Naive thymus-derived CD4-positive, alpha-beta T cell (primary cell): ENCODE measurements at regions of chr3 and their contacts with region 1.

Region 1: DNA sequence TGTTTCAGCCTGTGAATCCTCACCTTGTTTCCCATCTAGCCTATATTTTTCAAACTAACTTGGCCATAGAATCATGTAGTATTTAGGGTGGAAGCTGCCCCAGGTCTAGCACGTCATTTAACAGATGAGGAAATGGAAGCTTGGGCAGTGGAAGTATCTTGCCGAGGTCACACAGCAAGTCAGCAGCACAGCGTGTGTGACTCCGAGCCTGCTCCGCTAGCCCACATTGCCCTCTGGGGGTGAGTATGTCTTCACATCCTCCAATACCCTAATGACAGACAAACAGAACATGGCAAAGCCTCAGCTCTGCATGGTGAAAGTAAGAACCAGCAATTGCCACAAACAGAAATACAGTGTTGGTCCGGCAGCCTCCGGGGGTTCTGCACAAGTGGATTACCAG is 2.2 kb upstream of the CCR5 start:
- DNase-seq: peak in 4 of 9 donors; percentile 14 to 37 (median 20)
- ATAC-seq: peak; percentile 90
- H3K4me3 ChIP-seq: no peak overlapping the region
- H3K4me3 Mint-ChIP-seq: peak overlapping the region in 4 of 10 donors; percentile 3 to 26 (median 21)
- H3K27ac ChIP-seq: no peak overlapping the region
- H3K27ac Mint-ChIP-seq: peak overlapping the region in 3 of 9 donors; percentile 24 to 65 (median 57)
- H3K4me1 ChIP-seq: peaks cover 8 to 55% of the 10 kb centered on the region in 2 donors
- H3K4me1 Mint-ChIP-seq: peaks cover 6 to 63% (median 20%) of the 10 kb centered on the region in 7 donors
- H3K27me3 ChIP-seq: no peaks in the 10 kb centered on the region
- H3K27me3 Mint-ChIP-seq: peaks cover 0 to 39% (median 0%) of the 10 kb centered on the region in 5 donors

Region 2: GRCh38 chr3:46087871-46088270 is 280.7 kb before region 1 on chr3:
- CTCF ChIA-PET with region 1: no interaction called
- POLR2A ChIA-PET with region 1: no interaction called
- intact Hi-C with region 1: loop called in 1 of 2 experiments (anchors 1 kb)
- DNase-seq: no peak
- ATAC-seq: no peak
- H3K4me3 ChIP-seq: no peak overlapping the region
- H3K4me3 Mint-ChIP-seq: no peak overlapping the region
- H3K27ac ChIP-seq: no peak overlapping the region
- H3K27ac Mint-ChIP-seq: no peak overlapping the region
- H3K4me1 ChIP-seq: peaks cover 0 to 7% of the 10 kb centered on the region in 2 donors
- H3K4me1 Mint-ChIP-seq: peaks cover 0 to 52% (median 0%) of the 10 kb centered on the region in 7 donors
- H3K27me3 ChIP-seq: no peaks in the 10 kb centered on the region
- H3K27me3 Mint-ChIP-seq: peaks cover 0 to 28% (median 0%) of the 10 kb centered on the region in 5 donors

Region 3: GRCh38 chr3:46208167-46208704 is 160.3 kb before region 1 on chr3 and contains the start of gene CCR1:
- CTCF ChIA-PET with region 1: no interaction called
- POLR2A ChIA-PET with region 1: no interaction called
- intact Hi-C with region 1: loop called in 1 of 2 experiments (anchors 1 kb)
- DNase-seq: peak in 2 of 9 donors; percentile 0 to 64
- ATAC-seq: peak; percentile 72
- H3K4me3 ChIP-seq: no peak within 1 kb of the TSS
- H3K4me3 Mint-ChIP-seq: peak within 1 kb of the TSS in 4 of 10 donors; percentile 8 to 72 (median 41)
- H3K27ac ChIP-seq: no peak within 1 kb of the TSS
- H3K27ac Mint-ChIP-seq: peak within 1 kb of the TSS in 8 of 9 donors; percentile 5 to 93 (median 57)
- H3K4me1 ChIP-seq: peaks cover 13 to 44% of the 10 kb centered on the region in 2 donors
- H3K4me1 Mint-ChIP-seq: peaks cover 8 to 64% (median 24%) of the 10 kb centered on the region in 7 donors
- H3K27me3 ChIP-seq: no peaks in the 10 kb centered on the region
- H3K27me3 Mint-ChIP-seq: peaks cover 0 to 2% (median 0%) of the 10 kb centered on the region in 5 donors
- total RNA-seq, gene CCR1: 2.2 to 27.6 (median 4.5) TPM

Region 4: DNA sequence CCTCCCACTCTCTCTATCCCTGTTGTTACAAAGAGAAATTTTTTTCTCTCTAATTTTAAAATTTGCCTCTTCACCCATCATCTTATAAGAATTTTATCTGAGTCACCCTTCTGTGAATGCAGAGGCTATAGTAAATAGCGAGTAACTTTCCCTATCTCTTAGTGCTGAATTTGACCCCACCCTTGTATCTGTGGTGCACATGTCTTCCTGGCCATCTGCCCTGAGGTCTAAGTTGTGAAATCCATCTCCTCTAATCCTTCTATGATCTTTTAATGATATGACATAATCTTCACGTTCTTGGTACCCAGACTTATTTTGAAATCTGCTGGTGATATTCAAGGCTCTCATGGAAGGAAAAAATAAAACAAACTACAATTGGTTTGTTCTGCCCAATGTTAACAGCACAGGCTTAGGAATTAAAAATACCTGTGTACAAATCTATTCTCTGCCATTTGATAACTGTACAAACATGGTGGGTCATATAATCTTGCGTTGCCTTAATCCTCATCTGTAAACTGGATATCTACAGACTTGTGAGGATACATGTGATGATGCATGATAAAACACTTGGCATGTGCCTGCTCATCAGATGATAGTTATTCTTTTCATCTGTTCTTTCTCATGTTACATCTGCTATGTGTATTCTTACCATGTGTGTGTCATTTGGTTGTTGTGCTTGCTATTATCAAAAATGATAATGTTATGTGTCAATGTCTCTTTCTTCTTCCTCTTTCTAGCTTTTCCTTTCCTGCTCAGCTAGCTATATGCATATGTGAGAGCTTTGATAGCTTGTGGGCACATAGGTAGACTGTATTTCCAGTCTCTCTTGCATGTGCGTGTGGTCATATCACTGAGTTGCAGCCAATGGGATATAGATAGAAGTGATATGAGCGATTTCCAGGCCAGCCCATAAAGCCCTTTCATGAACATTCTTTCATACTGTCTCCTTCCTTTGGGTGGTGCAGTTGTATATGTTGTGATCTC is 140.0 kb before region 1 on chr3:
- CTCF ChIA-PET with region 1: interaction called, 4 read pairs
- POLR2A ChIA-PET with region 1: no interaction called
- intact Hi-C with region 1: loop called (anchors 5 kb)
- DNase-seq: no peak
- ATAC-seq: peak; percentile 80
- H3K4me3 ChIP-seq: no peak overlapping the region
- H3K4me3 Mint-ChIP-seq: peak overlapping the region in 1 of 10 donors; percentile 34
- H3K27ac ChIP-seq: no peak overlapping the region
- H3K27ac Mint-ChIP-seq: peak overlapping the region in 1 of 9 donors; percentile 8
- H3K4me1 ChIP-seq: peaks cover 0 to 12% of the 10 kb centered on the region in 2 donors
- H3K4me1 Mint-ChIP-seq: peaks cover 0 to 12% (median 0%) of the 10 kb centered on the region in 7 donors
- H3K27me3 ChIP-seq: no peaks in the 10 kb centered on the region
- H3K27me3 Mint-ChIP-seq: peaks cover 4 to 71% (median 13%) of the 10 kb centered on the region in 5 donors

Region 5: GRCh38 chr3:46297658-46298463 is 70.7 kb before region 1 on chr3:
- CTCF ChIA-PET with region 1: interaction called, 3 read pairs
- POLR2A ChIA-PET with region 1: interaction called, 4 read pairs
- intact Hi-C with region 1: loop called in 1 of 2 experiments (anchors 5 kb)
- DNase-seq: no peak
- ATAC-seq: peak; percentile 56
- H3K4me3 ChIP-seq: no peak overlapping the region
- H3K4me3 Mint-ChIP-seq: peak overlapping the region in 3 of 10 donors; percentile 42 to 73 (median 55)
- H3K27ac ChIP-seq: no peak overlapping the region
- H3K27ac Mint-ChIP-seq: peak overlapping the region in 4 of 9 donors; percentile 2 to 84 (median 64)
- H3K4me1 ChIP-seq: peaks cover 34 to 80% of the 10 kb centered on the region in 2 donors
- H3K4me1 Mint-ChIP-seq: peaks cover 45 to 93% (median 68%) of the 10 kb centered on the region in 7 donors
- H3K27me3 ChIP-seq: no peaks in the 10 kb centered on the region
- H3K27me3 Mint-ChIP-seq: peaks cover 0 to 2% (median 0%) of the 10 kb centered on the region in 5 donors

Region 6: DNA sequence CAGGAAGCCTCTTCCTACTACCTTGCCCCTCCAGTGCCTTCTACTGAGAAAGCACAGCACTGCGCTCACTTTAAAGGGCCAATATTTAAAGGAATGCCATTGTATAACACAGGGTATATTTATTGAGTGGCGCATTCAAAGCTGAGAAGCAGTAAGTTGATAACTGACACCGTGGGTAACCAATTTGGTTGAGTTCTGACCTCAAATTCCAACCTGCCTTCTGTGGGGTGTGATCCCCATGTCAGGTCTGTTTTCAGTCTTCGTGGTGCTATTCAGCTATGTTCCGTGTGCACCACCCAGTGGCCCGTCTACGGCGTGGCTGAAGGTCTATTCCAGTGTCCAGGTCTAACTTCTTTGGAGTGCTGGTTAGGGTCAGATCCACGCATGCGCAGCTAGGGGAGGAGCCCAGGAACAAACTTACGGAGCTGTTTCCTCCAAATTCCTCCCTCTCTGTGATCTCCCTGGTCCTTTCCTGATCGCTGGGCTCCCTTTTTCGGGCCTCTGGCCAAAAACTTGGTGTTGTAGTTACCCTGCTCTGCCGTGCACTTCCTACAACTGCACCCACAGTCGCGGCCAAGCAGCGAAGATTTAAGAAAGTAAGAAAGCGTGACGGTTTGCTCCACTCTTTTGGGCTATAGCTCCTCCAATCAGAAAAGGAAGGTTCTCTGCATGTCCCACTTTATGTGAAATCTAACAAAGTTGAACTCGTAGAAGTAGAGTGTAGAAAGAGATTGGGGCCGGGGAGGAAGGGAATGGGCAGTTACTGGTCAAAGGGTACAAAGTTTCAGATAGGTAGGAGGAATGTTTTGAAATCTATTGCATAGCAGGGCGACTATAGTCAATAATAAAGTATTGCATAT is 189.8 kb after region 1 on chr3:
- CTCF ChIA-PET with region 1: no interaction called
- POLR2A ChIA-PET with region 1: no interaction called
- intact Hi-C with region 1: loop called in 1 of 2 experiments (anchors 5 kb)
- DNase-seq: peak; percentile 58 to 77 (median 70)
- ATAC-seq: peak; percentile 99
- H3K4me3 ChIP-seq: peak overlapping the region; percentile 37
- H3K4me3 Mint-ChIP-seq: peak overlapping the region; percentile 79 to 89 (median 80)
- H3K27ac ChIP-seq: peak overlapping the region; percentile 11
- H3K27ac Mint-ChIP-seq: peak overlapping the region; percentile 19 to 93 (median 51)
- H3K4me1 ChIP-seq: peaks cover 5 to 12% of the 10 kb centered on the region in 2 donors
- H3K4me1 Mint-ChIP-seq: peaks cover 9 to 20% (median 17%) of the 10 kb centered on the region in 7 donors
- H3K27me3 ChIP-seq: no peaks in the 10 kb centered on the region
- H3K27me3 Mint-ChIP-seq: peaks cover 0 to 72% (median 0%) of the 10 kb centered on the region in 5 donors